HepG2 (cell line): ENCODE measurements at regions of chr12 and their contacts with region 1.

Region 1: GRCh38 chr12:6540181-6540877 is 6.0 kb downstream of the GAPDH start:
- DNase-seq: no peak
- ATAC-seq: peak; percentile 2
- H3K4me3 ChIP-seq: no peak overlapping the region
- H3K27ac ChIP-seq: no peak overlapping the region
- H3K4me1 ChIP-seq: peaks cover 53% of the 10 kb centered on the region
- H3K27me3 ChIP-seq: no peaks in the 10 kb centered on the region; a peak in 1 of 5 replicates
- CTCF ChIP-seq: no peak
- EP300 ChIP-seq: no peak
- POLR2A ChIP-seq: no peak
- RAD21 ChIP-seq: no peak

Region 2: GRCh38 chr12:6554168-6555017 is 14.1 kb after region 1 on chr12:
- CTCF ChIA-PET with region 1: interaction called, 4 read pairs
- POLR2A ChIA-PET with region 1: interaction called, 108 read pairs
- in situ Hi-C with region 1: no loop called
- intact Hi-C with region 1: no loop called
- DNase-seq: peak; percentile 77
- ATAC-seq: peak; percentile 72
- H3K4me3 ChIP-seq: peak overlapping the region; percentile 77 to 95 (median 92)
- H3K27ac ChIP-seq: peak overlapping the region; percentile 42
- H3K4me1 ChIP-seq: peaks cover 43% of the 10 kb centered on the region
- H3K27me3 ChIP-seq: no peaks in the 10 kb centered on the region; a peak in 1 of 5 replicates
- CTCF ChIP-seq: peak; percentile 86
- EP300 ChIP-seq: no peak
- POLR2A ChIP-seq: 0 out of 4 replicates have a peak, but pooled peaks of 1 of the 2 experiments have one; percentile 25
- RAD21 ChIP-seq: peak; percentile 38; the same call in 1 of the 2 replicates